CD8-positive, alpha-beta T cell (primary cell): ENCODE measurements at regions of chr22 and their contacts with region 1.

Region 1: GRCh38 chr22:25048659-25049647 is 96.4 kb downstream of the KIAA1671 start:
- DNase-seq: peak; percentile 41 to 83 (median 74)
- ATAC-seq: peak; percentile 96
- H3K4me3 ChIP-seq: no peak overlapping the region
- H3K4me3 Mint-ChIP-seq: no peak overlapping the region
- H3K27ac ChIP-seq: no peak overlapping the region
- H3K27ac Mint-ChIP-seq: no peak overlapping the region
- H3K4me1 ChIP-seq: no peaks in the 10 kb centered on the region
- H3K4me1 Mint-ChIP-seq: no peaks in the 10 kb centered on the region
- H3K27me3 ChIP-seq: no peaks in the 10 kb centered on the region
- H3K27me3 Mint-ChIP-seq: no peaks in the 10 kb centered on the region
- CTCF ChIP-seq: peak; percentile 78

Region 2: DNA sequence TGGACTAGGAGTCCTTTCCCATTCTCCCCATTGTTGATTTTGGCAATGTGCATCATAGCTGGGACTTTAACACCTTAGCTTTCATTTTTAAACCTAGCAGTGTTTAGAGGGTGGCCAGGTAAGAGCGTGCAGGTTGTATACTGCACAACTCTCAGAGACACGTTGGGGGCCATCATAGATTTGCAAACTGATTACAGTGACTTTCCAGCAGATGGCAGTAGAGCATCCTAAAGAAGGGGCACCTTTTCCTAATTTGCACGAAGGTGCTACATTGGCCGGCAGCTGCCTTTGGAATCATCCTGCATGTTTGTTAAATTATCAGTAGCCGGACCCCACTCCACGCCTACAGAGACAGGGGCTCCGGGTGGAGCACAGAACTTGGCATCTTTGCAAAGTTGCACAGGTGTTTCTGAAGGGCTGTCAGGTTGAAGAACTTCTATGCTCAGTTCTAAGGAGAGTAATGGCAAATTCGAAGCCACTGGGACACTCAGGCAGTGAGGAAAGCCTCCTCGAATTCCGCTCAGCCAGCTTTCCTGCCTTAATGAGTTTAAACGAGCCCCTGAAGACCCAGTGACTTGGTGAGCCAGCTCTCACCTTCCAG is 110.1 kb before region 1 on chr22:
- CTCF ChIA-PET with region 1: interaction called, 77 read pairs
- POLR2A ChIA-PET with region 1: no interaction called
- intact Hi-C with region 1: loop called (anchors 1 kb)
- DNase-seq: peak in 5 of 9 experiments; percentile 7 to 68 (median 23)
- ATAC-seq: peak; percentile 56
- H3K4me3 ChIP-seq: no peak overlapping the region
- H3K4me3 Mint-ChIP-seq: no peak overlapping the region
- H3K27ac ChIP-seq: no peak overlapping the region
- H3K27ac Mint-ChIP-seq: no peak overlapping the region
- H3K4me1 ChIP-seq: no peaks in the 10 kb centered on the region
- H3K4me1 Mint-ChIP-seq: no peaks in the 10 kb centered on the region
- H3K27me3 ChIP-seq: no peaks in the 10 kb centered on the region
- H3K27me3 Mint-ChIP-seq: peaks cover 2% of the 10 kb centered on the region
- CTCF ChIP-seq: peak; percentile 82

Region 3: GRCh38 chr22:24951942-24952836 is 96.8 kb before region 1 on chr22 and contains the start of gene KIAA1671:
- CTCF ChIA-PET with region 1: interaction called, 40 read pairs
- POLR2A ChIA-PET with region 1: no interaction called
- intact Hi-C with region 1: loop called in 1 of 2 experiments (anchors 1 kb)
- DNase-seq: peak; percentile 65 to 91 (median 84)
- ATAC-seq: peak; percentile 93
- H3K4me3 ChIP-seq: peak within 1 kb of the TSS; percentile 70 to 71
- H3K4me3 Mint-ChIP-seq: peak within 1 kb of the TSS; percentile 83
- H3K27ac ChIP-seq: no peak within 1 kb of the TSS
- H3K27ac Mint-ChIP-seq: no peak within 1 kb of the TSS
- H3K4me1 ChIP-seq: peaks cover 13% of the 10 kb centered on the region
- H3K4me1 Mint-ChIP-seq: peaks cover 21% of the 10 kb centered on the region
- H3K27me3 ChIP-seq: peaks cover 9% of the 10 kb centered on the region in 2 experiments
- H3K27me3 Mint-ChIP-seq: peaks cover 54% of the 10 kb centered on the region
- CTCF ChIP-seq: peak; percentile 86
- total RNA-seq, gene KIAA1671: 2.3 to 2.4 TPM

Region 4: GRCh38 chr22:25076336-25076735 is 27.4 kb after region 1 on chr22:
- CTCF ChIA-PET with region 1: interaction called, 151 read pairs
- POLR2A ChIA-PET with region 1: no interaction called
- intact Hi-C with region 1: no loop called
- DNase-seq: peak in 5 of 9 experiments; percentile 17 to 81 (median 61)
- ATAC-seq: peak; percentile 60
- H3K4me3 ChIP-seq: peak overlapping the region in 1 of 2 experiments; percentile 10
- H3K4me3 Mint-ChIP-seq: peak overlapping the region; percentile 67
- H3K27ac ChIP-seq: peak overlapping the region in 1 of 2 experiments; percentile 57
- H3K27ac Mint-ChIP-seq: peak overlapping the region; percentile 91
- H3K4me1 ChIP-seq: peaks cover 35% of the 10 kb centered on the region
- H3K4me1 Mint-ChIP-seq: peaks cover 69% of the 10 kb centered on the region
- H3K27me3 ChIP-seq: no peaks in the 10 kb centered on the region
- H3K27me3 Mint-ChIP-seq: no peaks in the 10 kb centered on the region
- CTCF ChIP-seq: no peak

Region 5: DNA sequence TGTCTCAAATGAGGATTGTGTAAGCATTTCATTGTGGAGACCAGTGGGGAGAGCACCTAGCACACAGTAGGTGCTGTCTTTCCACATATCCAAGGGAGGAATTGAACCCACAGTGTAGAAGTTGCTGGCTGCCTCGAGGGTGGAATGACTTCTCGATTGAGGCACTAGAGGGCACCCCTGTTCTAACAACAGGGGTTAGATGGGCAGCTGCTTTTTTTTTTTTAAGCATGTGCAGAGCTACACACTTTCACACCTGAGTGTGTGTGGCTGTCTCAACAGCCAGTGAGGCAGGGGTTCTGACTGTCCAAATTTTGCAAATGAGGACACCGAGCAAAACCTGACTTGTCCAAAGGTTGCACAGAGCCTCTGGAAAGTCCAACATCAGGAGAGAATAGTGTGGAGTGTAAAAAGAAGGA is 32.5 kb after region 1 on chr22:
- CTCF ChIA-PET with region 1: interaction called, 151 read pairs
- POLR2A ChIA-PET with region 1: no interaction called
- intact Hi-C with region 1: no loop called
- DNase-seq: peak in 8 of 9 experiments; percentile 17 to 75 (median 56)
- ATAC-seq: peak; percentile 75
- H3K4me3 ChIP-seq: no peak overlapping the region
- H3K4me3 Mint-ChIP-seq: no peak overlapping the region
- H3K27ac ChIP-seq: no peak overlapping the region
- H3K27ac Mint-ChIP-seq: no peak overlapping the region
- H3K4me1 ChIP-seq: peaks cover 32% of the 10 kb centered on the region
- H3K4me1 Mint-ChIP-seq: peaks cover 58% of the 10 kb centered on the region
- H3K27me3 ChIP-seq: no peaks in the 10 kb centered on the region
- H3K27me3 Mint-ChIP-seq: no peaks in the 10 kb centered on the region
- CTCF ChIP-seq: peak; percentile 67